ENCODE measurements at regions of chr11 and their contacts with region 1.

Region 1: GRCh38 chr11:26753723-26754504 is 32.1 kb upstream of the SLC5A12 start:
- DNase-seq: no peak
- H3K4me3 ChIP-seq: no peak overlapping the region
- H3K27ac ChIP-seq: no peak overlapping the region
- H3K4me1 ChIP-seq: peaks cover 0 to 31% (median 25%) of the 10 kb centered on the region in 4 donors
- H3K27me3 ChIP-seq: no peaks in the 10 kb centered on the region
- CTCF ChIP-seq: peak; percentile 75 to 86 (median 82)
- EP300 ChIP-seq: no peak
- POLR2A ChIP-seq: no peak

Region 2: GRCh38 chr11:26143566-26144290 is 610.2 kb before region 1 on chr11:
- intact Hi-C with region 1: no loop called
- DNase-seq: no peak
- H3K4me3 ChIP-seq: no peak overlapping the region
- H3K27ac ChIP-seq: no peak overlapping the region
- H3K4me1 ChIP-seq: peaks cover 0 to 10% (median 4%) of the 10 kb centered on the region in 4 donors
- H3K27me3 ChIP-seq: no peaks in the 10 kb centered on the region
- CTCF ChIP-seq: no peak
- EP300 ChIP-seq: no peak
- POLR2A ChIP-seq: no peak

Region 3: DNA sequence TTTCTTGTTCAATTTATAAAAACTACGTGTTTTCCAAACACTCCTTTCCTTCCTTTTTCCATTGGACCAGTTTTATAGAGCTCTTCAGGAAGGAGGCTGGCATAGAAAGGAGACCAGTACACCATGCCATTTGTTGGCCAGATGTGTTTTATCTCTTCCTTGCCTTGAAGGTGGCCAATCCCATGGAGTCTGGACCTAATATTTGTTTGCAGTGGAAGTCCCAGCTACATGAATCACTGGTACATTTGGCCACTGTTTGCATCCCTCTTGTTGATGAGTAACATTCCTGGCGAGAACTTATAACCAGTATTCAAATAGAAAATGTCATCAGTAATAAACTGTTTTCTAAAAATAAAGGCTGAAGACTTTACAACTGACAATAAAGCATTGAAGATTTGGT is 311.8 kb before region 1 on chr11:
- intact Hi-C with region 1: no loop called
- DNase-seq: no peak
- H3K4me3 ChIP-seq: no peak overlapping the region
- H3K27ac ChIP-seq: no peak overlapping the region
- H3K4me1 ChIP-seq: no peaks in the 10 kb centered on the region
- H3K27me3 ChIP-seq: no peaks in the 10 kb centered on the region
- CTCF ChIP-seq: no peak
- EP300 ChIP-seq: no peak
- POLR2A ChIP-seq: no peak

Region 4: DNA sequence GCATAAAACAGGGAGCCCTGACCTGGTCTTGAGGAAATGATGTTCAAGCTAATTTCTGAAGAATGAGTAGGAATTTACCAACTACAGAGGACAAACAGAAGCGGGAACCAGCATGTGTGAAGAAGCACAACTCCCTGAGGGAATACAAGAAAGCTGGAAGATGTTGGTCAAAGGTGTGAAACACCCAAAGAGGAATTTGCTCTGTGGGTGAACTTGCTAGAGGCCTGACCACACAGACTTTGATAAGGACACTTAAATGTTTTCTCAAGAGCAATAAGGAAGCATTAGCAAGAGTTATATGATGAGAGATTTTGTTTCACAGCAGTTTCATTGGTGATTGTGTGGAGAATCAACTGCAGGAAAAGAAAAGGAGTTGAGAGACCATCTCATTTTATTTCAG is 49.7 kb before region 1 on chr11:
- intact Hi-C with region 1: no loop called
- DNase-seq: no peak
- H3K4me3 ChIP-seq: no peak overlapping the region
- H3K27ac ChIP-seq: no peak overlapping the region
- H3K4me1 ChIP-seq: peaks cover 0 to 65% (median 37%) of the 10 kb centered on the region in 4 donors
- H3K27me3 ChIP-seq: no peaks in the 10 kb centered on the region
- CTCF ChIP-seq: no peak
- EP300 ChIP-seq: no peak
- POLR2A ChIP-seq: no peak

Region 5: DNA sequence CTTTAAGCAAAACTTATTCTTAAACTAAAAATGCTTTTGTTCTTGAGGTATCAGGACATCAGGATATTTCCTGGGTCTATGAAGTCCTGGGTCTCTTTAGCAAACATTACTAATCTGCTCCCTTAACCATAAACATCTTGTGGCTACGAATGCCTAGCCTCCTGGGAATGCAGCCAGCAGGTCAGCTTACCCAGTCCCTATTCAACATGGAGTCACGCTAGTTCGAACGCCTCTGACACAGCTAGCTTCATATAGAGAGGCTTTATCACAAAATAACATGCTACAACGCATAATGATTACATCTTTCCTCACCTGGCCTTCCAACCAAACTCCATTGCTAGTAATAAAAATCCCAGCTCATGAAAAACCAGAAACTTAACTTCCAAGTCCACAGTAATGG is 222.5 kb after region 1 on chr11:
- intact Hi-C with region 1: loop called (anchors 5 kb)
- DNase-seq: no peak
- H3K4me3 ChIP-seq: no peak overlapping the region
- H3K27ac ChIP-seq: peak overlapping the region in 3 of 4 donors; percentile 13 to 58 (median 30)
- H3K4me1 ChIP-seq: peaks cover 0 to 34% (median 30%) of the 10 kb centered on the region in 4 donors
- H3K27me3 ChIP-seq: no peaks in the 10 kb centered on the region
- CTCF ChIP-seq: no peak
- EP300 ChIP-seq: no peak
- POLR2A ChIP-seq: no peak

Region 6: GRCh38 chr11:26993965-26994457 is 240.1 kb after region 1 on chr11 and contains the start of gene FIBIN:
- intact Hi-C with region 1: loop called (anchors 5 kb)
- DNase-seq: no peak
- H3K4me3 ChIP-seq: peak within 1 kb of the TSS; percentile 66 to 88 (median 71)
- H3K27ac ChIP-seq: peak within 1 kb of the TSS; percentile 83 to 92 (median 87)
- H3K4me1 ChIP-seq: peaks cover 0 to 55% (median 32%) of the 10 kb centered on the region in 4 donors
- H3K27me3 ChIP-seq: no peaks in the 10 kb centered on the region
- CTCF ChIP-seq: peak in 1 of 3 experiments; percentile 3
- EP300 ChIP-seq: no peak
- POLR2A ChIP-seq: no peak
- total RNA-seq, gene FIBIN: 76.4 to 151 (median 101) TPM

Region 7: GRCh38 chr11:27124514-27125264 is 370.8 kb after region 1 on chr11:
- intact Hi-C with region 1: loop called (anchors 10 kb)
- DNase-seq: no peak
- H3K4me3 ChIP-seq: no peak overlapping the region
- H3K27ac ChIP-seq: no peak overlapping the region
- H3K4me1 ChIP-seq: no peaks in the 10 kb centered on the region
- H3K27me3 ChIP-seq: no peaks in the 10 kb centered on the region
- CTCF ChIP-seq: peak; percentile 22 to 33 (median 25)
- EP300 ChIP-seq: no peak
- POLR2A ChIP-seq: no peak

Region 8: GRCh38 chr11:27158722-27159679 is 405.1 kb after region 1 on chr11:
- intact Hi-C with region 1: loop called (anchors 1 kb)
- DNase-seq: no peak
- H3K4me3 ChIP-seq: no peak overlapping the region
- H3K27ac ChIP-seq: no peak overlapping the region
- H3K4me1 ChIP-seq: peaks cover 0 to 8% (median 3%) of the 10 kb centered on the region in 4 donors
- H3K27me3 ChIP-seq: no peaks in the 10 kb centered on the region
- CTCF ChIP-seq: peak; percentile 86 to 91 (median 87)
- EP300 ChIP-seq: no peak
- POLR2A ChIP-seq: no peak